GM10248 (cell line): ENCODE measurements at regions of chr1 and their contacts with region 1.

Region 1: GRCh38 chr1:46442317-46443161 is 47.1 kb upstream of the DMBX1 start:
- DNase-seq: peak; percentile 81
- CTCF ChIP-seq: peak; percentile 85

Region 2: GRCh38 chr1:46278807-46279206 is 163.7 kb before region 1 on chr1:
- CTCF ChIA-PET with region 1: no interaction called
- POLR2A ChIA-PET with region 1: no interaction called
- DNase-seq: no peak
- CTCF ChIP-seq: no peak

Region 3: DNA sequence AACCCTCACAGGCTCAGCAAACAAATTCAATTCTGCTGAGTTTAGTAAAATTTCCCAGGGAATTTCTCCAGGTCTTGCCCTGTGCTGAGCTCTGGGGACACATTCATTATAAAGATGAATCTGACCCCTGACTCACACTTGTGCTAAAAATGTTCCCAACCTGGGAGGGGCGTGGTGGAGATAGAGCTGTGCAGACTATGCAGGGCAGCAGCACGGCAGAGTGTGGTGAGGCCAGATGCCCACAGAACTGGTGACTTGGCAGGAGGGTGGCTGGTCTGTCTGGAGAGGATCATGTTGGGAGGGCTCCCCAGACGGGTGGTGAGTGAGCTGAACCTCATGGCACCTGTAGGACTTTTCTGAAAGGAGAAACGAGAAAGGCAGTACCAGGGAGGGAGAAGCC is 16.8 kb before region 1 on chr1:
- CTCF ChIA-PET with region 1: interaction called, 32 read pairs
- POLR2A ChIA-PET with region 1: no interaction called
- DNase-seq: no peak
- CTCF ChIP-seq: no peak

Region 4: GRCh38 chr1:46455951-46456350 is 13.4 kb after region 1 on chr1:
- CTCF ChIA-PET with region 1: interaction called, 17 read pairs
- POLR2A ChIA-PET with region 1: no interaction called
- DNase-seq: no peak
- CTCF ChIP-seq: no peak

Region 5: DNA sequence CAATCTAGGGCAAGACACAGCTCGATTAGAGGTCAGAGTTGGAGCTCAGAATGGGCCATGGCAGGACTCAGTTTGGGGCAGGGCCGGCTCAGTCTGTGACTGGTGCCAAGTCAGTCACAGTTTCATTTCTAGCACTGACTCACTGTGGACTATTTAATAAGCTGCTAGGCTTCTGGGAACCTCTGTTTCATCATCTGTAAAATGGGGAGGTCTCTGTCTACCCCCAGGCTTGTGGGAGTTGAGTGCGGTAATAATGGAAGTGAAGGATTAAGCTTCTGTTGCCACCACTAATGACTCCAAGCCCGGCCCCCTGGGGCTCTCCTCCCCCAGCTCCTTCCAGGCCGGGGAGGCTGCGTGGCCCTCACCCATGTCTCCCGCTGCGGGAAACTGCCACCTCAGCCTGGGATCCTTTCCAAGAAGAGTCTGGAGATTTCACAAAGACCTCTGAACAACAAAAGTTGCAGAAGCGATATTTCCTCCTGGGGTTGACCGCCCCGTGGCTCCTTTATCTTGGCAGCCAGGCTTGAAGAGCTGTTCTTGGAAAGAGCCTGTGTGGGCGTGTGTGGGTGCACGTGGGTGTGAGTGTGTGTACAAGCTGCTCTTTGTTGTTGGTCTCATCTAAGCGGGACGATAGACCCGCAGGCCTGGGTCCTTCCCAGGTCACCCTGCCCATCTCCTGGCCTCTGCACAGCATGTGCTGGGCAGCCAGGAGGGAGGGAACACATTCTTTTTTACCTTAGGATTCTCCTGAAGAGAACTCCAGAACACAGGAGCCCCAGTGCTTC is 79.8 kb after region 1 on chr1:
- CTCF ChIA-PET with region 1: interaction called, 82 read pairs
- POLR2A ChIA-PET with region 1: no interaction called
- DNase-seq: no peak
- CTCF ChIP-seq: no peak

Region 6: GRCh38 chr1:46547481-46548383 is 105.2 kb after region 1 on chr1:
- CTCF ChIA-PET with region 1: interaction called, 12 read pairs
- POLR2A ChIA-PET with region 1: no interaction called
- DNase-seq: peak; percentile 56
- CTCF ChIP-seq: peak; percentile 44